ENCODE measurements at regions of chr4 and their contacts with region 1.

Region 1: GRCh38 chr4:24736066-24736465 is 59.3 kb upstream of the SOD3 start:
- DNase-seq: peak; percentile 40
- H3K4me3 ChIP-seq: no peak overlapping the region
- H3K27ac ChIP-seq: no peak overlapping the region
- H3K4me1 ChIP-seq: no peaks in the 10 kb centered on the region
- H3K27me3 ChIP-seq: no peaks in the 10 kb centered on the region
- CTCF ChIP-seq: peak; percentile 27 to 46
- POLR2A ChIP-seq: no peak

Region 2: GRCh38 chr4:24303926-24304325 is 432.1 kb before region 1 on chr4:
- CTCF ChIA-PET with region 1: no interaction called
- POLR2A ChIA-PET with region 1: no interaction called
- dilution Hi-C with region 1: no loop called
- intact Hi-C with region 1: no loop called
- DNase-seq: no peak
- H3K4me3 ChIP-seq: no peak overlapping the region
- H3K27ac ChIP-seq: no peak overlapping the region
- H3K4me1 ChIP-seq: no peaks in the 10 kb centered on the region
- H3K27me3 ChIP-seq: no peaks in the 10 kb centered on the region
- CTCF ChIP-seq: no peak
- POLR2A ChIP-seq: no peak

Region 3: GRCh38 chr4:25043548-25043947 is 307.5 kb after region 1 on chr4:
- CTCF ChIA-PET with region 1: interaction called, 9 read pairs
- POLR2A ChIA-PET with region 1: no interaction called
- dilution Hi-C with region 1: no loop called
- intact Hi-C with region 1: loop called (anchors 1 kb)
- DNase-seq: no peak
- H3K4me3 ChIP-seq: no peak overlapping the region
- H3K27ac ChIP-seq: no peak overlapping the region
- H3K4me1 ChIP-seq: no peaks in the 10 kb centered on the region
- H3K27me3 ChIP-seq: peaks cover 5 to 18% of the 10 kb centered on the region in 2 experiments
- CTCF ChIP-seq: no peak
- POLR2A ChIP-seq: no peak